ENCODE measurements at regions of chr20 and their contacts with region 1.

Region 1: GRCh38 chr20:33638726-33639125 is 23.4 kb upstream of the C20orf144 start:
- DNase-seq: no peak
- ATAC-seq: no peak
- H3K4me3 ChIP-seq: no peak overlapping the region
- H3K4me3 Mint-ChIP-seq: no peak overlapping the region
- H3K27ac ChIP-seq: no peak overlapping the region
- H3K27ac Mint-ChIP-seq: no peak overlapping the region
- H3K4me1 ChIP-seq: no peaks in the 10 kb centered on the region
- H3K4me1 Mint-ChIP-seq: no peaks in the 10 kb centered on the region
- H3K27me3 ChIP-seq: no peaks in the 10 kb centered on the region
- H3K27me3 Mint-ChIP-seq: no peaks in the 10 kb centered on the region

Region 2: GRCh38 chr20:33624399-33624798 is 14.3 kb before region 1 on chr20:
- CTCF ChIA-PET with region 1: no interaction called
- POLR2A ChIA-PET with region 1: no interaction called
- DNase-seq: peak in 1 of 35 experiments; percentile 52
- ATAC-seq: peak in 3 of 4 experiments; percentile 43 to 81 (median 45)
- H3K4me3 ChIP-seq: no peak overlapping the region
- H3K4me3 Mint-ChIP-seq: peak overlapping the region in 1 of 3 donors; percentile 15
- H3K27ac ChIP-seq: peak overlapping the region; percentile 39
- H3K27ac Mint-ChIP-seq: peak overlapping the region; percentile 82 to 85
- H3K4me1 ChIP-seq: peaks cover 3 to 25% of the 10 kb centered on the region in 2 experiments
- H3K4me1 Mint-ChIP-seq: peaks cover 13 to 31% (median 30%) of the 10 kb centered on the region in 3 donors
- H3K27me3 ChIP-seq: no peaks in the 10 kb centered on the region
- H3K27me3 Mint-ChIP-seq: no peaks in the 10 kb centered on the region

Region 3: DNA sequence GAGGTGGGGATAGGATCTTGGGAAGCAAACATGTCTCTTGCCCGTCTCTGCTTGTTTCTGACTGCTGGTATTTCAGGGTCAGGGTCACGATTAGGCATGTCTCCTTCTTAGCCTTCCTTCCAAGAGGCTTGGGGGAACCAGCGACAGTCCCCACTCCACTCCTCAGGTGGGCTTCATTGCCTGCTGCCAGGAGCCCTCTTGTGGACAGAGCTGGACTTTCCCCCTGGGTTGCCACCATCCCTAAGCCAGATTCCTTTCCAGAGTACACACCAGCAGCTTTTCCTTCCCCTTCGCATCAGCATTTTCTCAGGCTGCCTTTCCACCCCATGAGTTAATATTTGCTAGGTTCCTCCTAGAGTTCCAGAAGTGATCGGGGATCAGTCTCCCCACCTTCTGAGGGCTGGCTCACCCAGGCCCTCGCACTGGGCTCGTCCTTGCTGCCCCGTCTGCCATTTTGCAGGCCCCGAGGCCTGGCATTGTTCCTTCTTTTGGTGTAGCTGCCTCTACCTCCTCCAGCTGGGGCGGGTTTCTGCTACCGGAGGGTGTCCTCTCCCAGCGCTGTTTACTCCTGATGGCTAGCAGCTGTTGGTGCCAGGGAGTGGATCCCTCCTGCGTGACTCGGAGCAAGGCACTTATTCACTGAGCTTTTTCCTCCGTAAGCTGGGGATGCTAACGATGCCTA is 14.6 kb after region 1 on chr20:
- CTCF ChIA-PET with region 1: no interaction called
- POLR2A ChIA-PET with region 1: no interaction called
- DNase-seq: peak in 18 of 35 experiments; percentile 13 to 64 (median 30)
- ATAC-seq: peak; percentile 56 to 75 (median 63)
- H3K4me3 ChIP-seq: no peak overlapping the region
- H3K4me3 Mint-ChIP-seq: no peak overlapping the region
- H3K27ac ChIP-seq: no peak overlapping the region
- H3K27ac Mint-ChIP-seq: no peak overlapping the region
- H3K4me1 ChIP-seq: peaks cover 0 to 8% of the 10 kb centered on the region in 2 experiments
- H3K4me1 Mint-ChIP-seq: peaks cover 4 to 10% (median 6%) of the 10 kb centered on the region in 3 donors
- H3K27me3 ChIP-seq: peaks cover 0 to 8% of the 10 kb centered on the region in 2 experiments
- H3K27me3 Mint-ChIP-seq: peaks cover 0 to 2% of the 10 kb centered on the region in 2 donors

Region 4: DNA sequence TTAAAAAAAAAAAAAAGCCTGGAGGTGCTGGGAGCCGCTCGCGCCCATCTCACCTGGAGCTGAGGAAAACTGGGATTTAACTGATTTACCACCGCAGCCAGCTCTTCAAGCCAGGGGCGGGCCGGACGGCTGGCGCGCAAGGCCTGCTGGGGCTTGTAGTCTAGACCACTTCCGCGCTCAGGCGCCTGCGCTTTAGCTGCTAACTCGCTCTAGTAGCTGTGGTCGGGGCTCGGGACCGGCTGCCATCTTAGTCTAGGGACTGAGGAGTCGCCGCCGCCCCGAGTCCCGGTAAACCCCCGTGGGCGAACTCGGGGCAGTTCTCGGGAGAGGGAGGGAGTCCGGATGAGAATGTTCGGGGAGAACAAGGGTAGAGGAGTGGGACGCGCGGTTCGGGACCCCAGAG is 724.3 kb after region 1 on chr20 and contains the start of gene ITCH:
- CTCF ChIA-PET with region 1: no interaction called
- POLR2A ChIA-PET with region 1: interaction called in 1 of 2 experiments, 11 read pairs
- DNase-seq: peak; percentile 74 to 94 (median 89)
- ATAC-seq: peak; percentile 99 to 100 (median 100)
- H3K4me3 ChIP-seq: peak within 1 kb of the TSS; percentile 77 to 81
- H3K4me3 Mint-ChIP-seq: peak within 1 kb of the TSS; percentile 84 to 100 (median 99)
- H3K27ac ChIP-seq: peak within 1 kb of the TSS; percentile 85
- H3K27ac Mint-ChIP-seq: peak within 1 kb of the TSS; percentile 99 to 100
- H3K4me1 ChIP-seq: peaks cover 10 to 48% of the 10 kb centered on the region in 2 experiments
- H3K4me1 Mint-ChIP-seq: peaks cover 38 to 46% (median 45%) of the 10 kb centered on the region in 3 donors
- H3K27me3 ChIP-seq: peaks cover 0 to 5% of the 10 kb centered on the region in 2 experiments
- H3K27me3 Mint-ChIP-seq: no peaks in the 10 kb centered on the region
- total RNA-seq, gene ITCH: 50.5 to 63.6 (median 53.3) TPM

Measured in T-cell (primary cell).